ENCODE measurements at regions of chr7 and their contacts with region 1.

Region 1: DNA sequence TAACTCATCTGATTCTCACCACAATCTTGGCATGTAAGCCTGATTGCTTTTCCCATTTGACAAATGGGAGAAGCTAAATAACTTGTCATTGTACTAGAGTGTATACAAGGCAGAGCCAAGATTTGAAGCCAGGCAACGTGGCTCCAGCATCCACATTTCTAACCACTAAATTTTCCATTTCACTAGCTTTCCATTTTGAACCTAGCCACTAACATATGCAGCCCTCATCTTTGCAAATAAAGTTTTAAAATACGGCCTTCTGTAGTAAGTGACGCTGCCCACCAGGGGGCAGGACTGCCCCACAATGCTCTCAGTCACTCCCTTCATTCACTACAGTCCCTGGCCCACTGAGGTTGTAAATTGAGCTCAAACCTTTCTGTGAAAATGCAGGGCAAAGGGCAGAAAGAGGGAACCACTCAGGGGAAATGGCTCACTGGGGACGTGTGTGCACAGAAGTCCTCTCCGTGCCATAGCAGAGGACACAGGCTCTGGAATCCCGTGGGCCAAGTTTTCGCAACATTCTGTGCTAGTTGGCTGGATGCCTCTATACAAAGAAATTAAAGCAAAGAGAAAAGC is 315.7 kb downstream of the TNS3 start:
- DNase-seq: peak; percentile 50
- H3K4me3 Mint-ChIP-seq: no peak overlapping the region
- H3K27ac Mint-ChIP-seq: no peak overlapping the region
- H3K4me1 Mint-ChIP-seq: no peaks in the 10 kb centered on the region
- H3K27me3 Mint-ChIP-seq: peaks cover 2% of the 10 kb centered on the region

Region 2: GRCh38 chr7:47422611-47423010 is 156.4 kb after region 1 on chr7:
- CTCF ChIA-PET with region 1: no interaction called
- intact Hi-C with region 1: loop called (anchors 5 kb)
- DNase-seq: no peak
- H3K4me3 Mint-ChIP-seq: no peak overlapping the region
- H3K27ac Mint-ChIP-seq: no peak overlapping the region
- H3K4me1 Mint-ChIP-seq: no peaks in the 10 kb centered on the region
- H3K27me3 Mint-ChIP-seq: peaks cover 2% of the 10 kb centered on the region

Region 3: GRCh38 chr7:47818796-47819606 is 552.8 kb after region 1 on chr7:
- CTCF ChIA-PET with region 1: interaction called, 19 read pairs
- intact Hi-C with region 1: loop called (anchors 1 kb)
- DNase-seq: peak; percentile 74
- H3K4me3 Mint-ChIP-seq: no peak overlapping the region
- H3K27ac Mint-ChIP-seq: no peak overlapping the region
- H3K4me1 Mint-ChIP-seq: no peaks in the 10 kb centered on the region
- H3K27me3 Mint-ChIP-seq: no peaks in the 10 kb centered on the region

Region 4: GRCh38 chr7:47937065-47937683 is 671.0 kb after region 1 on chr7:
- CTCF ChIA-PET with region 1: no interaction called
- intact Hi-C with region 1: loop called (anchors 10 kb)
- DNase-seq: peak; percentile 34
- H3K4me3 Mint-ChIP-seq: no peak overlapping the region
- H3K27ac Mint-ChIP-seq: no peak overlapping the region
- H3K4me1 Mint-ChIP-seq: peaks cover 4% of the 10 kb centered on the region
- H3K27me3 Mint-ChIP-seq: no peaks in the 10 kb centered on the region

Region 5: GRCh38 chr7:48063985-48064384 is 797.8 kb after region 1 on chr7:
- CTCF ChIA-PET with region 1: no interaction called
- intact Hi-C with region 1: no loop called
- DNase-seq: no peak
- H3K4me3 Mint-ChIP-seq: no peak overlapping the region
- H3K27ac Mint-ChIP-seq: no peak overlapping the region
- H3K4me1 Mint-ChIP-seq: no peaks in the 10 kb centered on the region
- H3K27me3 Mint-ChIP-seq: no peaks in the 10 kb centered on the region